Activated B cell treated with CpG ODN at 0.5 μM for 24 hours (primary cell): ENCODE measurements at regions of chr4 and their contacts with region 1.

Region 1: DNA sequence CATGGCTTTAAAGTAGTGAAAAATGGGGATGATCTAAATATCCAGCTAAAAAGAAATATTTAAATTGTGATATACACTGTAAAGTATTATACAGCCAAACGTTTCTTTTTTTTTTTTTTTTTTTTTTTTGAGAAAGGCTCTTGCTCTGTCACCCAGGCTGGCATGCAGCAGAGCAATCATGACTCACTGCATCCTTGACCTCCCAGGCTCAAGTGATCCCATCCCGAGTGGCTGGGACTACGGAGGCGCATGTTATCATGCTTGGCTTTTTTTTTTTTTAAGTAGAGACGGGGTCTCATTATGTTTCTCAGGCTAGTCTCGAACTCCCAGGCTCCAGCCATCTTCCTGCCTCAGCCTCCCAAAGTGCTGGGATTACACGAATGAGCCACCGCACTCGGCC is 17.1 kb downstream of the SMIM14 start:
- DNase-seq: no peak
- ATAC-seq: no peak
- H3K4me3 Mint-ChIP-seq: peak overlapping the region; percentile 9
- H3K27ac Mint-ChIP-seq: no peak overlapping the region
- H3K4me1 Mint-ChIP-seq: peaks cover 69% of the 10 kb centered on the region
- H3K27me3 Mint-ChIP-seq: no peaks in the 10 kb centered on the region
- CTCF ChIP-seq: no peak

Region 2: GRCh38 chr4:39565878-39566600 is 55.5 kb before region 1 on chr4:
- CTCF ChIA-PET with region 1: no interaction called
- POLR2A ChIA-PET with region 1: interaction called, 4 read pairs
- intact Hi-C with region 1: loop called (anchors 2 kb)
- DNase-seq: no peak
- ATAC-seq: no peak
- H3K4me3 Mint-ChIP-seq: no peak overlapping the region
- H3K27ac Mint-ChIP-seq: peak overlapping the region; percentile 20
- H3K4me1 Mint-ChIP-seq: peaks cover 34% of the 10 kb centered on the region
- H3K27me3 Mint-ChIP-seq: no peaks in the 10 kb centered on the region
- CTCF ChIP-seq: no peak

Region 3: DNA sequence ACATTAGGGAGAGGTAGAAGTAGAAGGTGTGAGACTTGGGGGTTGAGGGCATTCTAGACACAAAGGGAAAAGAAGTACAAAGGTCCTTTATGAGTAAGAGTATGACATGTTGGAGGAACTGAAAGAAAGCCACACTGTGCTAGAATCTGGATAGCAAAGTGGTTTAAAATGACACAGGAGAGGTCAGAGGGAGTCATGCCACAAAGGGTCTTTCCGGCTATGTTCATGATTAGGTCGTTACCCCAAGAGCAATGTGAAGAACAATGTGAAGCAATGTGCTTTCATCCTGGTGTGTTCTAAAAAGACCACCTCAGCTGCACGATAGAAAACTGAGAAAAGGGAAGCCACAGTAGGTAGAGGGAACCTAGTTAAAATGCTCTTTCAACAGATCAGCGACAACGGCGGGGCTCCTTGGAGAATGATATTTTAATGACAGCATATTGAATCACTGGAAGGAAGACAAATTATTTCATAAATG is 12.1 kb before region 1 on chr4:
- CTCF ChIA-PET with region 1: interaction called, 7 read pairs
- POLR2A ChIA-PET with region 1: interaction called, 134 read pairs
- intact Hi-C with region 1: loop called (anchors 1 kb)
- DNase-seq: no peak
- ATAC-seq: peak; percentile 84
- H3K4me3 Mint-ChIP-seq: peak overlapping the region; percentile 75
- H3K27ac Mint-ChIP-seq: peak overlapping the region; percentile 88
- H3K4me1 Mint-ChIP-seq: peaks cover 67% of the 10 kb centered on the region
- H3K27me3 Mint-ChIP-seq: no peaks in the 10 kb centered on the region
- CTCF ChIP-seq: no peak

Region 4: DNA sequence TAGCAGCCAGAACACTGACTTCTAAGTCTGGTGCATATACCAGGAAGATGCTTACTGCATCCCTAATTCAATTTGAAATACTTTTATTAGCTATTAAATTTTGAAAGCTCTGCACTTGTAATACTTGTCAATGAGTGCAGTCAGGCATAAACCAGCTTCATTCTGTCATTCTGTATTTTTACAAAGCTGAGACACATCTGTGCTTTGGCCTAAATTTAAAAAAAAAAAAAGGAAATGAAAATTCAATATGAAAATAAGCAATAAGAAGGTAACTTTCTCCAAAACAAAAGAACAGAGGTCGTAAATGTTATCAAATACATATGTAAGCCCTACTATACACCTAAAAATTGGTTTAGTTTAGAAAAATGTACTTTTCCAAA is 10.1 kb after region 1 on chr4:
- CTCF ChIA-PET with region 1: interaction called, 3 read pairs
- POLR2A ChIA-PET with region 1: interaction called, 219 read pairs
- intact Hi-C with region 1: loop called (anchors 1 kb)
- DNase-seq: no peak
- ATAC-seq: peak; percentile 70
- H3K4me3 Mint-ChIP-seq: peak overlapping the region; percentile 44
- H3K27ac Mint-ChIP-seq: peak overlapping the region; percentile 96
- H3K4me1 Mint-ChIP-seq: peaks cover 86% of the 10 kb centered on the region
- H3K27me3 Mint-ChIP-seq: no peaks in the 10 kb centered on the region
- CTCF ChIP-seq: no peak

Region 5: GRCh38 chr4:39657465-39657864 is 35.9 kb after region 1 on chr4:
- CTCF ChIA-PET with region 1: no interaction called
- POLR2A ChIA-PET with region 1: interaction called, 10 read pairs
- intact Hi-C with region 1: loop called (anchors 1 kb)
- DNase-seq: no peak
- ATAC-seq: peak; percentile 91
- H3K4me3 Mint-ChIP-seq: peak overlapping the region; percentile 71
- H3K27ac Mint-ChIP-seq: peak overlapping the region; percentile 81
- H3K4me1 Mint-ChIP-seq: peaks cover 35% of the 10 kb centered on the region
- H3K27me3 Mint-ChIP-seq: no peaks in the 10 kb centered on the region
- CTCF ChIP-seq: no peak

Region 6: GRCh38 chr4:40086421-40086820 is 464.8 kb after region 1 on chr4:
- CTCF ChIA-PET with region 1: no interaction called
- POLR2A ChIA-PET with region 1: no interaction called
- intact Hi-C with region 1: no loop called
- DNase-seq: no peak
- ATAC-seq: no peak
- H3K4me3 Mint-ChIP-seq: no peak overlapping the region
- H3K27ac Mint-ChIP-seq: no peak overlapping the region
- H3K4me1 Mint-ChIP-seq: no peaks in the 10 kb centered on the region
- H3K27me3 Mint-ChIP-seq: no peaks in the 10 kb centered on the region
- CTCF ChIP-seq: no peak